Gastrocnemius medialis (tissue), 4 donors: ENCODE measurements at regions of chr6 and their contacts with region 1.

Region 1: GRCh38 chr6:136582711-136583471 is 32.7 kb upstream of the MAP7 start:
- DNase-seq: no peak
- ATAC-seq: peak; percentile 50 to 69
- H3K4me3 ChIP-seq: no peak overlapping the region
- H3K27ac ChIP-seq: peak overlapping the region in 2 of 4 donors; percentile 9 to 53
- H3K4me1 ChIP-seq: peaks cover 30 to 38% of the 10 kb centered on the region in 2 donors
- H3K27me3 ChIP-seq: no peaks in the 10 kb centered on the region
- CTCF ChIP-seq: peak; percentile 41 to 62 (median 45)
- POLR2A ChIP-seq: no peak

Region 2: GRCh38 chr6:134636186-134636799 is 1946.6 kb before region 1 on chr6:
- in situ Hi-C with region 1: no loop called
- intact Hi-C with region 1: no loop called
- DNase-seq: no peak
- ATAC-seq: no peak
- H3K4me3 ChIP-seq: no peak overlapping the region
- H3K27ac ChIP-seq: no peak overlapping the region
- H3K4me1 ChIP-seq: peaks cover 7 to 14% of the 10 kb centered on the region in 2 donors
- H3K27me3 ChIP-seq: no peaks in the 10 kb centered on the region
- CTCF ChIP-seq: no peak
- POLR2A ChIP-seq: no peak

Region 3: GRCh38 chr6:136607932-136608772 is 25.3 kb after region 1 on chr6:
- in situ Hi-C with region 1: no loop called
- intact Hi-C with region 1: loop called (anchors 2 kb)
- DNase-seq: peak in 1 of 2 donors; percentile 53
- ATAC-seq: peak; percentile 82
- H3K4me3 ChIP-seq: no peak overlapping the region
- H3K27ac ChIP-seq: no peak overlapping the region
- H3K4me1 ChIP-seq: peaks cover 0 to 5% of the 10 kb centered on the region in 2 donors
- H3K27me3 ChIP-seq: no peaks in the 10 kb centered on the region
- CTCF ChIP-seq: peak; percentile 23 to 77 (median 71)
- POLR2A ChIP-seq: no peak